Naive thymus-derived CD4-positive, alpha-beta T cell (primary cell): ENCODE measurements at regions of chr2 and their contacts with region 1.

Region 1: GRCh38 chr2:25276569-25277465 is 64.9 kb downstream of the DNMT3A start:
- DNase-seq: peak; percentile 59 to 89 (median 70)
- ATAC-seq: peak; percentile 50
- H3K4me3 ChIP-seq: peak overlapping the region; percentile 53
- H3K4me3 Mint-ChIP-seq: peak overlapping the region; percentile 71 to 83 (median 79)
- H3K27ac ChIP-seq: peak overlapping the region; percentile 92
- H3K27ac Mint-ChIP-seq: peak overlapping the region; percentile 88 to 100 (median 99)
- H3K4me1 ChIP-seq: peaks cover 54 to 82% of the 10 kb centered on the region in 2 donors
- H3K4me1 Mint-ChIP-seq: peaks cover 52 to 89% (median 80%) of the 10 kb centered on the region in 7 donors
- H3K27me3 ChIP-seq: no peaks in the 10 kb centered on the region
- H3K27me3 Mint-ChIP-seq: no peaks in the 10 kb centered on the region

Region 2: DNA sequence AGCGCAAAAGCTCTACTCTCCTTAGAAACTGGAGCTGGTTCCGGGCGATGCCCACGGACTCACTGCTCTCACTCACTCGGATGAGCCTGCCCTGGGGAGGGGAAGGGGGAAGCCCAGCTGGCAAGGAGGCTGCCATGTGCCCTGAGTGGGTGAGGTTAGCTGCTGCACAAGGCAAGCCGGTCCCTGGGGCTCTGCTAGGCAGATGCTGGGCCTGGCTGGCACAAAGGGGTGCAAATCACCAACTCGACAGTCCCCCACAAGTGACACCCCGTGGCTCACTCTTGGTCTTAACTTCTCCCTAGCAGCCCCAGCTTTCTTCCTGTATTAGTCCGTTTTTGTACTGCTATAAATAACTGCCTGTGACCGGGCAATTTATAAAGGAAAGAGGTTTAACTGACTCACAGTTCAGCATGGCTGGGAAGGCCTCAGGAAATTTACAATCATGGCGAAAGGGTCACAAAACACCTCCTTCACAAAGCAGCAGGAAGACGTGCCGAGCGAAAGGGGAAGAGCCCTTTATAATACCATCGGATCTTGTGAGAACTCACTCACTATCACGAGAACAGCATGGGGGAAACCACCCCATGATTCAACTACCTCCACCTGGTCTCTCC is 390.0 kb before region 1 on chr2:
- CTCF ChIA-PET with region 1: no interaction called
- POLR2A ChIA-PET with region 1: no interaction called
- intact Hi-C with region 1: no loop called
- DNase-seq: no peak
- ATAC-seq: peak; percentile 73
- H3K4me3 ChIP-seq: no peak overlapping the region
- H3K4me3 Mint-ChIP-seq: no peak overlapping the region
- H3K27ac ChIP-seq: no peak overlapping the region
- H3K27ac Mint-ChIP-seq: no peak overlapping the region
- H3K4me1 ChIP-seq: no peaks in the 10 kb centered on the region
- H3K4me1 Mint-ChIP-seq: peaks cover 4 to 15% (median 10%) of the 10 kb centered on the region in 7 donors
- H3K27me3 ChIP-seq: no peaks in the 10 kb centered on the region
- H3K27me3 Mint-ChIP-seq: no peaks in the 10 kb centered on the region

Region 3: DNA sequence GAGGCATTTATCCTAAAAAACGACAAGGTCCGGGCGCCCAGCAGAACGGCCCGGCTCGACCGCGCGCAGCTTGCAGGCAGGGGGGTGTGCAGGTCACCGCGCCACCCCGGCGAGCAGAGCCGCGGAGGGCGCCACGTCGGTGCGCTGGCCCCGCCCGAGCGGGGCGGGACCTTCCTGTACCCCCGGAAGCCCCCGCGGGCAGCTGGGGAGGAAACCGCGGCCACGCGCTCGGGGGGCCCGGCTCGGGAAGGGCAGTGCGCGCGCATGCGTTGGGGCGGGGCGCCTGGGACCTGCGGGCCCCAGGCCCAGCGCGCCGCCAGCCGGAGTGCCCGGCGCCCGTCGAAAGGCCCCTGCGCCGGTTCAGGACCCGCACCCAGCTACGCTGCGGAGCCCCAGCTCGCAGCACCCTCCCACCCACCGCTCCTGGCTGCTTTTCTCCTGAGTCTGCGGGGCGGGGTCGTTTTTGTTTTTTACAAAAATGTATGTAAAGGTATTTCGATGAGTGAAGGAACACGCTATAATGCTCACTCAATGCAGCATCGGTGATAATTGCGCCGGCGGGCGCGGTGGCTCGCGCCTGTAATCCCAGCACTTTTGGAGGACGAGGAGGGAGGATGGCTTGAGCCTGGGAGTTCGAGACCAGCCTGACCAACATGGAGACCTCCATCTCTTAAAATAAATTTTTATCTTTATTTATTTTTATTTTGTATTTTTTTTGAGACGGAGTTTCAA is 60.7 kb before region 1 on chr2:
- CTCF ChIA-PET with region 1: interaction called, 3 read pairs
- POLR2A ChIA-PET with region 1: interaction called, 11 read pairs
- intact Hi-C with region 1: loop called in 1 of 2 experiments (anchors 5 kb)
- DNase-seq: peak; percentile 73 to 88 (median 85)
- ATAC-seq: peak; percentile 96
- H3K4me3 ChIP-seq: peak overlapping the region; percentile 61
- H3K4me3 Mint-ChIP-seq: peak overlapping the region; percentile 71 to 88 (median 78)
- H3K27ac ChIP-seq: peak overlapping the region; percentile 74
- H3K27ac Mint-ChIP-seq: peak overlapping the region; percentile 64 to 94 (median 89)
- H3K4me1 ChIP-seq: peaks cover 0 to 6% of the 10 kb centered on the region in 2 donors
- H3K4me1 Mint-ChIP-seq: peaks cover 9 to 33% (median 18%) of the 10 kb centered on the region in 7 donors
- H3K27me3 ChIP-seq: no peaks in the 10 kb centered on the region
- H3K27me3 Mint-ChIP-seq: no peaks in the 10 kb centered on the region

Region 4: GRCh38 chr2:25265802-25266201 is 11.0 kb before region 1 on chr2:
- CTCF ChIA-PET with region 1: interaction called, 6 read pairs
- POLR2A ChIA-PET with region 1: interaction called, 33 read pairs
- intact Hi-C with region 1: loop called in 1 of 2 experiments (anchors 1 kb)
- DNase-seq: peak in 3 of 9 donors; percentile 31 to 56 (median 42)
- ATAC-seq: peak; percentile 67
- H3K4me3 ChIP-seq: no peak overlapping the region
- H3K4me3 Mint-ChIP-seq: peak overlapping the region in 7 of 10 donors; percentile 14 to 58 (median 38)
- H3K27ac ChIP-seq: peak overlapping the region; percentile 60
- H3K27ac Mint-ChIP-seq: peak overlapping the region in 7 of 9 donors; percentile 64 to 90 (median 83)
- H3K4me1 ChIP-seq: peaks cover 14 to 30% of the 10 kb centered on the region in 2 donors
- H3K4me1 Mint-ChIP-seq: peaks cover 26 to 69% (median 60%) of the 10 kb centered on the region in 7 donors
- H3K27me3 ChIP-seq: no peaks in the 10 kb centered on the region
- H3K27me3 Mint-ChIP-seq: no peaks in the 10 kb centered on the region

Region 5: GRCh38 chr2:25314514-25315315 is 37.9 kb after region 1 on chr2:
- CTCF ChIA-PET with region 1: interaction called, 5 read pairs
- POLR2A ChIA-PET with region 1: interaction called, 15 read pairs
- intact Hi-C with region 1: loop called (anchors 1 to 2 kb)
- DNase-seq: peak in 8 of 9 donors; percentile 51 to 90 (median 64)
- ATAC-seq: peak; percentile 79
- H3K4me3 ChIP-seq: peak overlapping the region; percentile 51
- H3K4me3 Mint-ChIP-seq: peak overlapping the region; percentile 61 to 83 (median 81)
- H3K27ac ChIP-seq: peak overlapping the region; percentile 79
- H3K27ac Mint-ChIP-seq: peak overlapping the region; percentile 79 to 97 (median 92)
- H3K4me1 ChIP-seq: peaks cover 34 to 60% of the 10 kb centered on the region in 2 donors
- H3K4me1 Mint-ChIP-seq: peaks cover 36 to 84% (median 70%) of the 10 kb centered on the region in 7 donors
- H3K27me3 ChIP-seq: no peaks in the 10 kb centered on the region
- H3K27me3 Mint-ChIP-seq: no peaks in the 10 kb centered on the region

Region 6: GRCh38 chr2:25362049-25362433 is 85.2 kb after region 1 on chr2:
- CTCF ChIA-PET with region 1: interaction called, 6 read pairs
- POLR2A ChIA-PET with region 1: interaction called, 20 read pairs
- intact Hi-C with region 1: loop called in 1 of 2 experiments (anchors 1 kb)
- DNase-seq: peak; percentile 86 to 99 (median 93)
- ATAC-seq: peak; percentile 98
- H3K4me3 ChIP-seq: peak overlapping the region; percentile 78
- H3K4me3 Mint-ChIP-seq: peak overlapping the region; percentile 83 to 95 (median 89)
- H3K27ac ChIP-seq: peak overlapping the region; percentile 81
- H3K27ac Mint-ChIP-seq: peak overlapping the region; percentile 84 to 96 (median 92)
- H3K4me1 ChIP-seq: peaks cover 3 to 4% of the 10 kb centered on the region in 2 donors
- H3K4me1 Mint-ChIP-seq: peaks cover 11 to 32% (median 25%) of the 10 kb centered on the region in 7 donors
- H3K27me3 ChIP-seq: no peaks in the 10 kb centered on the region
- H3K27me3 Mint-ChIP-seq: no peaks in the 10 kb centered on the region